ENCODE measurements at regions of chr11 and their contacts with region 1.

Region 1: DNA sequence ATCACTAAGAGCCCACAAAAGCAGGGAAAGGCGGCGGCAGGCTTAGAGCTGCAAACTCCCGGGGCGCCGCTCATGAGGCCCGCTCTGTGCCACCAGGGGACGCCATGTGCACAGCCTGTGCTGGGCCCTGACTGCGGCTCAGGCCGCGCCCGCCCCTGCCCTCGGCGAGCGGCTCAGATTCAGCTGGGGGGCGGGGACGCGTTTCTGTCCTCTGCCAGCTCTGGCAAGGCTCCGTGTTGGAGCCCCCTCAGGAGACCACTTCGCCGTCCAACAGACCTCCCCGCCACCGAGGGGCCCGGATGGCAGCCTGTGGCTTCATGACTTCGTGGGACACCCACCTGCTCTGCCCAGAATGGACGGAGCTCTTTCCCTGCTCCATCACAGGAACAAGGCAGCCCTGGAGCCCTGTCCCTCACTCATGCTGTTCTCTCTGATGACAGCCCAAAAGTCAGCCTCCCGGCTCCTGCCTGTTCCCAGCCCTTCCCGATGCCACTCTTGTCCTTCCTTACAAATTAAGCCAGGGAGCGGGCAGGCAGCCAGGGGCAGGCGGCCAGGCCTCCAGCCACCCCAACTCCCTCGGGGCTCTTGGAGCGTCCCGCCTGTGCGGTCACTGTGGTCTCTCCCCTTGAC is 69.1 kb downstream of the NAT10 start:
- DNase-seq: peak; percentile 75 to 80
- ATAC-seq: peak; percentile 98 to 99
- H3K4me3 ChIP-seq: peak overlapping the region; percentile 32
- H3K27ac ChIP-seq: peak overlapping the region; percentile 66 to 82
- H3K4me1 ChIP-seq: peaks cover 25% of the 10 kb centered on the region
- CTCF ChIP-seq: peak; percentile 93
- EP300 ChIP-seq: no peak
- POLR2A ChIP-seq: no peak
- RAD21 ChIP-seq: peak; percentile 98 to 100

Region 2: GRCh38 chr11:33949252-33949913 is 225.1 kb before region 1 on chr11:
- CTCF ChIA-PET with region 1: no interaction called
- POLR2A ChIA-PET with region 1: no interaction called
- DNase-seq: no peak
- ATAC-seq: no peak
- H3K4me3 ChIP-seq: no peak overlapping the region
- H3K27ac ChIP-seq: no peak overlapping the region
- H3K4me1 ChIP-seq: no peaks in the 10 kb centered on the region
- CTCF ChIP-seq: no peak
- EP300 ChIP-seq: no peak
- POLR2A ChIP-seq: no peak
- RAD21 ChIP-seq: no peak

Region 3: GRCh38 chr11:34185926-34186841 is 11.7 kb after region 1 on chr11:
- CTCF ChIA-PET with region 1: interaction called, 31 read pairs
- POLR2A ChIA-PET with region 1: no interaction called
- DNase-seq: no peak
- ATAC-seq: no peak
- H3K4me3 ChIP-seq: no peak overlapping the region
- H3K27ac ChIP-seq: no peak overlapping the region
- H3K4me1 ChIP-seq: peaks cover 5% of the 10 kb centered on the region; the same call in 2 of the 3 replicates
- CTCF ChIP-seq: no peak
- EP300 ChIP-seq: no peak
- POLR2A ChIP-seq: no peak
- RAD21 ChIP-seq: no peak

Region 4: GRCh38 chr11:34214961-34215805 is 40.7 kb after region 1 on chr11:
- CTCF ChIA-PET with region 1: interaction called, 20 read pairs
- POLR2A ChIA-PET with region 1: no interaction called
- DNase-seq: peak; percentile 63 to 64
- ATAC-seq: peak; percentile 80 to 91
- H3K4me3 ChIP-seq: no peak overlapping the region
- H3K27ac ChIP-seq: peak overlapping the region; percentile 20 to 70; a peak in 5 of 6 replicates
- H3K4me1 ChIP-seq: peaks cover 59% of the 10 kb centered on the region
- CTCF ChIP-seq: no peak
- EP300 ChIP-seq: no peak
- POLR2A ChIP-seq: no peak
- RAD21 ChIP-seq: no peak

Region 5: DNA sequence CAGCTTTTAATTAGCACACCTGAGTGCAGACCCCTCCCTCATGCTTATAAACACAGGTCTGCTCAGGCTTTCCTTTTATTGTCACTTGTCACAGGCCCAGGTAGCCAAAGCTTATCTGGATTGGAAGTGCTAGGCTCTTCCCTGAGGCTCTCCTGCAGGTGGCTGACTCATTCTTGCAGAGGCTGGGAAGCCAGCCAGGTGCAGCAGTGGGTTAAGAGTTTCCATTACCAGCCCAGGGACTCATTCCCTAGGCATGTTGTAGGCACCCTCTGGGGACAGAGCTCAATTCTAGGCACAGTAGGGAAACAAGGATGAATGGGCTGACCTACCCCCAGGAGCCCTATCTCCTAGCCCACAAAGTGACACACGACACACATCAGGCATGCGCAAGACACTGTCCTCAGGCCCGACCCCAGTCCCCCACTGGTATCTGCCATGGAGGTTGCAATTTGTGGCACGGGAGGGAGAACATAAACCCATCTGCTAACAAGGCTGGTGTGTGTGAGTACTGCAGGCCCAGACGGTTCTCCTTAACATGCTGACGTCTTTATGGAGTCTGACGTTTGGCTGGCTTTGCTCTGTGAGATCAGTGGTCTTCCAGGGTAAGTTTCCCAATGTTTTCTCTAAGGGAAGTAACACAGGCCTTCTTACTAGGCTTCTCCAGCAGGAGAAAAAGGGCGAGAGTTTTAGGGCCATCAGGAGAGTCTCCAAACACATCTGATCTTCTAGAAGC is 89.1 kb after region 1 on chr11:
- CTCF ChIA-PET with region 1: interaction called, 20 read pairs
- POLR2A ChIA-PET with region 1: no interaction called
- DNase-seq: peak; percentile 62 to 69
- ATAC-seq: peak; percentile 82 to 83
- H3K4me3 ChIP-seq: no peak overlapping the region
- H3K27ac ChIP-seq: peak overlapping the region; percentile 32 to 80; a peak in 5 of 6 replicates
- H3K4me1 ChIP-seq: peaks cover 68% of the 10 kb centered on the region
- CTCF ChIP-seq: no peak
- EP300 ChIP-seq: no peak
- POLR2A ChIP-seq: no peak
- RAD21 ChIP-seq: no peak

Region 6: DNA sequence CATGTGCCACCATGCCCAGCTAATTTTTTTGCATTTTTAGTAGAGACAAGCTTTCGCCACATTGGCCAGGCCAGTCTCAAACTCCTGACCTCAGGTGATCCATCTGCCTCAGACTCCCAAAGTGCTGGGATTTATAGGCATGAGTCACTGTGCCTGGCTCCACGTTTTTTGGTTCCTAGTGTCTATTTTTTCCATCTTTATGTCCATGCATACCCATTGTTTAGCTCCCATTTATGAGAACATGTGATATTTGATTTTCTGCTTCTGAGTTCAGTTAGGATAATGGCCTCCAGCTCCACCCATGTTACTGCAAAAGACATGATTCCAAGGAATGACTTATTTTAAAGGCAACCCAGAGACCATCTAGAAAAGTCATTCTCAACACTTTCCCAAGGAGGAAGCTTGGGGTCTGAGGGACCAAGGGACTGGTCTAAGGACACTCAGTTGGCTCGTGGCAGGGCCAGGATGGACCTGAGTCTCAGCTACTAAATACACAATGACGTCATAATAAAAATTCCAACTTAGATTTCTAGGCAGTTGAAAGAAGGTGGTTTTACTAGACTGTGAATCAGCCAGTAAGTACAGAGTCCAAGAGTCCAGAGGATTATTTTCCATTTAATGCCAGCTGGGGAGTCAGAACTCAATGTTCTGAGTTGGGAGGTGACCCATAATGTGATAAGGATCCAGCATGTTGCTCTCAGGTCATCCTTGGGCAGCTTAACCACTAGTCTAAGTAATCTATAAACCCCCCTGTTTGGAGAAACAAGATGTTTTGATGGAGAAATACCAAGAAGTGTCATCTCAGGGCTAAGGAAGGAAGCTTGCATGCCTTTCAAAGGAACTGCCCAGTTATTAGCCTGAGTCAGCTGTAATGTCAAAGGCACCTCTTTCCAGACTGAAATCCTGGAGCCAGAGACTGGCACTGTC is 143.8 kb after region 1 on chr11:
- CTCF ChIA-PET with region 1: interaction called, 15 read pairs
- POLR2A ChIA-PET with region 1: no interaction called
- DNase-seq: peak; percentile 69 to 86
- ATAC-seq: peak; percentile 87 to 89
- H3K4me3 ChIP-seq: peak overlapping the region; percentile 11; the same call in 1 of the 3 replicates
- H3K27ac ChIP-seq: peak overlapping the region; percentile 82 to 83
- H3K4me1 ChIP-seq: peaks cover 58% of the 10 kb centered on the region
- CTCF ChIP-seq: no peak
- EP300 ChIP-seq: 0 out of 5 replicates have a peak, but pooled peaks of 1 of the 2 experiments have one; percentile 27
- POLR2A ChIP-seq: no peak
- RAD21 ChIP-seq: peak; percentile 7 to 38; a peak in 2 of 5 replicates

Region 7: GRCh38 chr11:34357701-34358257 is 183.3 kb after region 1 on chr11 and contains the start of gene ABTB2:
- CTCF ChIA-PET with region 1: interaction called, 170 read pairs
- POLR2A ChIA-PET with region 1: interaction called, 40 read pairs
- DNase-seq: peak; percentile 96 to 97
- ATAC-seq: peak; percentile 78 to 88
- H3K4me3 ChIP-seq: peak within 1 kb of the TSS; percentile 79
- H3K27ac ChIP-seq: peak within 1 kb of the TSS; percentile 79 to 91
- H3K4me1 ChIP-seq: peaks cover 32% of the 10 kb centered on the region
- CTCF ChIP-seq: no peak
- EP300 ChIP-seq: no peak
- POLR2A ChIP-seq: peak; percentile 99
- RAD21 ChIP-seq: peak in 1 of 2 experiments; percentile 17; a peak in 4 of 5 replicates
- polyA plus RNA-seq, gene ABTB2: 8.9 and 10.3 TPM in 2 replicates

Measured in A549 (cell line).